ENCODE measurements at regions of chr2 and their contacts with region 1.

Region 1: GRCh38 chr2:109545828-109546713 is 67.7 kb downstream of the SEPTIN10 start:
- DNase-seq: peak; percentile 24 to 69
- ATAC-seq: peak; percentile 89 to 92
- H3K4me3 ChIP-seq: no peak overlapping the region
- H3K27ac ChIP-seq: no peak overlapping the region
- H3K4me1 ChIP-seq: peaks cover 4% of the 10 kb centered on the region; the same call in 2 of the 3 replicates
- CTCF ChIP-seq: peak; percentile 90
- EP300 ChIP-seq: no peak
- POLR2A ChIP-seq: no peak
- RAD21 ChIP-seq: peak; percentile 96 to 97

Region 2: GRCh38 chr2:109529532-109530449 is 16.3 kb before region 1 on chr2:
- CTCF ChIA-PET with region 1: interaction called, 45 read pairs
- POLR2A ChIA-PET with region 1: no interaction called
- DNase-seq: no peak
- ATAC-seq: no peak
- H3K4me3 ChIP-seq: no peak overlapping the region
- H3K27ac ChIP-seq: no peak overlapping the region
- H3K4me1 ChIP-seq: no peaks in the 10 kb centered on the region
- CTCF ChIP-seq: no peak
- EP300 ChIP-seq: no peak
- POLR2A ChIP-seq: no peak
- RAD21 ChIP-seq: no peak

Region 3: DNA sequence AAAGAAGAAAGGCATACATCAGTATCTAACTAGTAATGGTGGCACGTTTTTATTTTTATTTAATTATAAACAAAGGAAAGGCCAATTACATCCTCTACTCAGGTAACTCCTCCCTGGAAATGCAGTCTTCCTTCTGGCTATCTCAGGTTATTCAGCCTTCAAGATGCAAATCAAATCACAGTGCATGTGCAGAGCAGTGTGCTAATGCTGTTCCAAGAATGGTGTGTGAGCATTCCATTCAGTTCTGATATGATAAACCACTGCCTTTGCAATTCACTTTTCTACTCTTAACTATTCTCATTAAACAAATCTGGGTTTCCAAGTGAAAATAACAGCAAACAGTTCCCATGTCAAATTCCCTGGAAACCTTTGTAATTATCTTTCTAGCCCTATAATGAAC is 29.3 kb after region 1 on chr2:
- CTCF ChIA-PET with region 1: interaction called, 14 read pairs
- POLR2A ChIA-PET with region 1: no interaction called
- DNase-seq: no peak
- ATAC-seq: no peak
- H3K4me3 ChIP-seq: no peak overlapping the region
- H3K27ac ChIP-seq: no peak overlapping the region
- H3K4me1 ChIP-seq: no peaks in the 10 kb centered on the region
- CTCF ChIP-seq: no peak
- EP300 ChIP-seq: no peak
- POLR2A ChIP-seq: no peak
- RAD21 ChIP-seq: no peak

Region 4: GRCh38 chr2:109613922-109614714 is 68.0 kb after region 1 on chr2 and contains the starts of genes SEPTIN10 and SOWAHC:
- CTCF ChIA-PET with region 1: interaction called, 37 read pairs
- POLR2A ChIA-PET with region 1: interaction called, 6 read pairs
- DNase-seq: peak; percentile 63 to 99
- ATAC-seq: peak; percentile 90 to 95
- H3K4me3 ChIP-seq: peak within 1 kb of the TSS; percentile 69
- H3K27ac ChIP-seq: peak within 1 kb of the TSS; percentile 92 to 99
- H3K4me1 ChIP-seq: peaks cover 47% of the 10 kb centered on the region; the same call in 2 of the 3 replicates
- CTCF ChIP-seq: no peak
- EP300 ChIP-seq: no peak
- POLR2A ChIP-seq: peak; percentile 89
- RAD21 ChIP-seq: 0 out of 5 replicates have a peak, but pooled peaks of 1 of the 2 experiments have one; percentile 18
- polyA plus RNA-seq, gene SEPTIN10: 76.9 and 87.6 TPM in 2 replicates
- polyA plus RNA-seq, gene SOWAHC: 9.9 and 13.7 TPM in 2 replicates

Region 5: DNA sequence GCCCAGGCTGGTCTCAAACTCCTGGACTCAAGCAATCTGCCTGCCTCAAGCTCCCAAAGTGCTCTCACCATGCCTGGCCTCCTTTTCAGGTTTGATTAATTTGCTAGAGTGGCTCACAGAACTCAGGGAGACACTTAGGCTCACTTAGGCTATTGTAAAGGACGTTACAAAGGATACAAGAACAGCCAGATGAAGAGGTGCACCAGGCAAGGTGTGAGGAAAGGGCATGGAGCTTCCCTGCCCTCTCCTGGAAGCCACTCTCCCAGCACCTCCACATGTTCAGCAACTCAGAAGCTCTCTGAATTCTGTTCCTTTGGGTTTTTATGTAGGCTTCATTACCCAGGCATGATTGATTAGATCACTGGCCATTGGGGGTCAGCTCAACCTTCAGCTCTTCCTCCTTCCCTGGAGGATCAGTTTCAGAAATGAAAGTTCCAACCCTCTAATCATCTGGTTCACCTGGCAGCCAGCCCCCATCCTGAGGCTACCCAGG is 169.3 kb after region 1 on chr2:
- CTCF ChIA-PET with region 1: interaction called, 34 read pairs
- POLR2A ChIA-PET with region 1: no interaction called
- DNase-seq: peak in 1 of 2 experiments; percentile 48
- ATAC-seq: peak; percentile 68 to 88; a peak in 4 of 6 replicates
- H3K4me3 ChIP-seq: no peak overlapping the region
- H3K27ac ChIP-seq: no peak overlapping the region
- H3K4me1 ChIP-seq: no peaks in the 10 kb centered on the region
- CTCF ChIP-seq: peak; percentile 36; the same call in 2 of the 3 replicates
- EP300 ChIP-seq: no peak
- POLR2A ChIP-seq: no peak
- RAD21 ChIP-seq: peak; percentile 57 to 61

Measured in A549 (cell line).